HEK293 (cell line): ENCODE measurements at regions of chr12 and their contacts with region 1.

Region 1: GRCh38 chr12:67025543-67026114 is 243.5 kb upstream of the CAND1 start:
- H3K4me3 ChIP-seq: no peak overlapping the region
- H3K27ac ChIP-seq: no peak overlapping the region
- H3K4me1 ChIP-seq: peaks cover 9% of the 10 kb centered on the region
- CTCF ChIP-seq: peak; percentile 42; the same call in 1 of the 2 replicates

Region 2: GRCh38 chr12:67048366-67048765 is 22.7 kb after region 1 on chr12:
- CTCF ChIA-PET with region 1: interaction called, 11 read pairs
- POLR2A ChIA-PET with region 1: no interaction called
- H3K4me3 ChIP-seq: no peak overlapping the region
- H3K27ac ChIP-seq: no peak overlapping the region
- H3K4me1 ChIP-seq: peaks cover 47% of the 10 kb centered on the region
- CTCF ChIP-seq: no peak

Region 3: GRCh38 chr12:67208296-67209067 is 182.9 kb after region 1 on chr12:
- CTCF ChIA-PET with region 1: no interaction called
- POLR2A ChIA-PET with region 1: no interaction called
- H3K4me3 ChIP-seq: no peak overlapping the region
- H3K27ac ChIP-seq: no peak overlapping the region
- H3K4me1 ChIP-seq: no peaks in the 10 kb centered on the region
- CTCF ChIP-seq: no peak